Right lobe of liver (tissue), 6 donors: ENCODE measurements at regions of chr1 and their contacts with region 1.

Region 1: DNA sequence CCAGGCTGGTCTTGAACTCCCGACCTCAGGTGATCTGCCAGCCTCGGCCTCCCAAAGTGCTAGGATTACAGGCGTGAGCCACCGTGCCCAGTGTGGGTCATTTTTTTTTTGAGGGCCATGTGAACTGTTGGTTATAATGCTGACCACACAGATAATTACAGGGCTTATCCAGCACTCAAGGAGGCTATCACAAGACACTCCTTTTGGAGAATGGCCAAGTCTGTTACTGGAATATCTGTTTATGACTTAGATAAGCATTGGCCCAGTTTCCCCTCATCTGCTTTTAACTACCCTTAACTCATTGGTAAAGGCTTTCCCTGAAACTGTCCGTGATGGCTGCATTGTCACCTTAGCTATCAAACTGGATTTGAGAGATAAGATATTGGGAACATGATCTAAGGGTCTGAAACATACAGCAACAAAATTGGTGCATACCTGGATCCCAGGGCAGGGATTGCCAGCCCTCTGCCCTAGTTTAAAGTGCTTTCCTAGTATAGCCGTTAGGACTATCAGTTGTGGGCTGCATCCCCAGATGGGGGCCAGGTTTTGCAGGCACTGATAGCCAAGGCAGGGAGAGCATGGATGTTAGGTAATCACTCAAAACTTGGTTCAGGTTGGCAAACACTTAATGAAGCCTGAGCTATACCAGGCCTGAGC is 15.6 kb downstream of the SZT2 start:
- DNase-seq: no peak
- ATAC-seq: no peak
- H3K4me3 ChIP-seq: no peak overlapping the region
- H3K27ac ChIP-seq: no peak overlapping the region
- H3K4me1 ChIP-seq: no peaks in the 10 kb centered on the region
- H3K27me3 ChIP-seq: no peaks in the 10 kb centered on the region
- CTCF ChIP-seq: no peak
- POLR2A ChIP-seq: no peak

Region 2: GRCh38 chr1:43227143-43227764 is 178.1 kb before region 1 on chr1:
- intact Hi-C with region 1: loop called in 1 of 2 experiments (anchors 10 kb)
- DNase-seq: peak; percentile 72 to 78 (median 77)
- ATAC-seq: peak; percentile 79 to 88 (median 84)
- H3K4me3 ChIP-seq: no peak overlapping the region
- H3K27ac ChIP-seq: no peak overlapping the region
- H3K4me1 ChIP-seq: peaks cover 0 to under 1% (median 0%) of the 10 kb centered on the region in 4 donors
- H3K27me3 ChIP-seq: no peaks in the 10 kb centered on the region
- CTCF ChIP-seq: peak; percentile 88 to 96 (median 94)
- POLR2A ChIP-seq: no peak